Ovary (tissue), 10 donors: ENCODE measurements at regions of chr9 and their contacts with region 1.

Region 1: GRCh38 chr9:129312251-129313122 is 134.4 kb upstream of the IER5L start:
- DNase-seq: peak in 3 of 5 donors; percentile 16 to 28 (median 19)
- H3K4me3 ChIP-seq: no peak overlapping the region
- H3K27ac ChIP-seq: no peak overlapping the region
- H3K4me1 ChIP-seq: peaks cover 27% of the 10 kb centered on the region
- H3K27me3 ChIP-seq: no peaks in the 10 kb centered on the region
- CTCF ChIP-seq: no peak
- EP300 ChIP-seq: no peak
- POLR2A ChIP-seq: no peak

Region 2: GRCh38 chr9:129352146-129352865 is 39.8 kb after region 1 on chr9:
- intact Hi-C with region 1: loop called in 1 of 4 experiments (anchors 2 kb)
- DNase-seq: peak; percentile 79 to 88 (median 86)
- H3K4me3 ChIP-seq: peak overlapping the region; percentile 48
- H3K27ac ChIP-seq: peak overlapping the region; percentile 82 to 86
- H3K4me1 ChIP-seq: peaks cover 13% of the 10 kb centered on the region
- H3K27me3 ChIP-seq: no peaks in the 10 kb centered on the region
- CTCF ChIP-seq: no peak
- EP300 ChIP-seq: no peak
- POLR2A ChIP-seq: no peak